Ovary (tissue), 10 donors: ENCODE measurements at regions of chr2 and their contacts with region 1.

Region 1: GRCh38 chr2:134670955-134671354 is 47.8 kb downstream of the TMEM163 start:
- DNase-seq: peak in 3 of 5 donors; percentile 20 to 24 (median 20)
- H3K4me3 ChIP-seq: no peak overlapping the region
- H3K27ac ChIP-seq: peak overlapping the region in 1 of 2 donors; percentile 72
- H3K4me1 ChIP-seq: peaks cover 11% of the 10 kb centered on the region
- H3K27me3 ChIP-seq: no peaks in the 10 kb centered on the region
- CTCF ChIP-seq: no peak
- EP300 ChIP-seq: no peak
- POLR2A ChIP-seq: no peak

Region 2: DNA sequence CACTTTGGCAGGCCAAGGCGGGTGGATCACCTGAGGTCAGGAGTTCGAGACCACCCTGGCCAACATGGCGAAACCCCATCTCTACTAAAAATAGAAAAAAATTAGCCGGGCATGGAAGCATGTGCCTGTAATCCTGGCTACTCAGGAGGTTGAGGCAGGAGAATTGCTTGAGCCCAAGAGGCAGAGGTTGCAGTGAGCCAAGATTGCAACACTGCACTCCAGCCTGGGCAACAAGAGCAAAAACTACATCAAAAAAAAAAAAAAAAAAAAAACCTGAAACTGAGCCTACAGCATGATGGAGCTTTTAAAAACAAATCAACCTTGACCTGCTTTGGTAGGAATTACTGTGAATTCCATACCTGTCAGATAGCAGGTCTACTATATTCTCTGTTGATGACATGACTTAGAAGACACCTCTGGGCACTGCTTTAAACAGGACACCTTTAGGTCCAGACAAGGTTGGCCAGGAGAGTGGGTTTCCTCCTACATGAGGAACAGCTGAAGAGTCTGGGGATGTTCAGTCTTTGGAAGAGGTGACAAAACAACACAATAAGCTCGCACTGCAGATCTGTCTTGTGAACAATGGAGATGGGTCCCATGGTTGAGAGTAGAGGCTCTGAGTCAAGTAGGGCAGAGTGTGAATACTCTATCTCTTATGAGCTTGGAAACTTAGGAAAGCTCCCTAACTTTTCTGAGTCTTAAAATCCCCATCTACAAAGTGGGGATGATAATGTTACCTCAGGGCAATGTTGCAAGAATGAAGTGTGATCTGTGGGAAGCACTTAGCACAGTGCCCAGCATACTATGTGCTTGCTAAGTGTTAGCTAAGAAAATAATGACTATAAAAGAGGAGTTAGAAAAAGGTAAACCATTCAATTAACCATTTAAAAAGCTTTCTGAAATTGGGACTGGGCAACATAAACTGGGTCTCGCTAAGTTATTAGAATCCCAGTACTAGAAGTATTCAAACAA is 22.7 kb after region 1 on chr2:
- intact Hi-C with region 1: loop called in 1 of 4 experiments (anchors 1 kb)
- DNase-seq: no peak
- H3K4me3 ChIP-seq: no peak overlapping the region
- H3K27ac ChIP-seq: no peak overlapping the region
- H3K4me1 ChIP-seq: no peaks in the 10 kb centered on the region
- H3K27me3 ChIP-seq: no peaks in the 10 kb centered on the region
- CTCF ChIP-seq: no peak
- EP300 ChIP-seq: no peak
- POLR2A ChIP-seq: no peak